ENCODE measurements at regions of chr10 and their contacts with region 1.

Region 1: DNA sequence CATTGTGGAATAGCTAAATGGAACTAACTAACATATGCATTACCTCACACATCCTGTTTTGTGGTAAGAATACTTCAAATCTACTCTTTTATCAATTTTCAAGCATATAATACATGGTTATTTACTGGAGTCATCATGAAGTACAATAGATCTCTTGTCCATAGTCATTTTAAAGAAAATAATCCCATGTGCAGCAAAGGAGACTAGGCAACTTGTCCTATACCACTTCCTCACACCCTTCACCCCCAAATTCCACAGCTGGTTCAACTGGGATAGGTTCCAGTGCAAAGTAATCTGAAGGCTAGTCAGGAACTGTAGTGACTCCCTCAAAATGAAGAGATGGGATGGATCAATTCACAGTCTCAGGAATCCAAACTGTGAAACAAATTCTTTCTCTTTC is 176.1 kb downstream of the SGMS1 start:
- DNase-seq: no peak
- H3K4me3 ChIP-seq: no peak overlapping the region
- H3K27ac ChIP-seq: no peak overlapping the region
- H3K4me1 ChIP-seq: no peaks in the 10 kb centered on the region
- H3K27me3 ChIP-seq: no peaks in the 10 kb centered on the region
- CTCF ChIP-seq: no peak
- POLR2A ChIP-seq: no peak

Region 2: GRCh38 chr10:49791100-49791499 is 656.6 kb before region 1 on chr10:
- intact Hi-C with region 1: loop called (anchors 10 kb)
- DNase-seq: no peak
- H3K4me3 ChIP-seq: no peak overlapping the region
- H3K27ac ChIP-seq: no peak overlapping the region
- H3K4me1 ChIP-seq: no peaks in the 10 kb centered on the region
- H3K27me3 ChIP-seq: no peaks in the 10 kb centered on the region
- CTCF ChIP-seq: no peak
- POLR2A ChIP-seq: no peak

Region 3: GRCh38 chr10:50496228-50496627 is 48.5 kb after region 1 on chr10:
- intact Hi-C with region 1: no loop called
- DNase-seq: no peak
- H3K4me3 ChIP-seq: no peak overlapping the region
- H3K27ac ChIP-seq: no peak overlapping the region
- H3K4me1 ChIP-seq: no peaks in the 10 kb centered on the region
- H3K27me3 ChIP-seq: no peaks in the 10 kb centered on the region
- CTCF ChIP-seq: no peak
- POLR2A ChIP-seq: no peak